A673 (cell line): ENCODE measurements at regions of chr2 and their contacts with region 1.

Region 1: DNA sequence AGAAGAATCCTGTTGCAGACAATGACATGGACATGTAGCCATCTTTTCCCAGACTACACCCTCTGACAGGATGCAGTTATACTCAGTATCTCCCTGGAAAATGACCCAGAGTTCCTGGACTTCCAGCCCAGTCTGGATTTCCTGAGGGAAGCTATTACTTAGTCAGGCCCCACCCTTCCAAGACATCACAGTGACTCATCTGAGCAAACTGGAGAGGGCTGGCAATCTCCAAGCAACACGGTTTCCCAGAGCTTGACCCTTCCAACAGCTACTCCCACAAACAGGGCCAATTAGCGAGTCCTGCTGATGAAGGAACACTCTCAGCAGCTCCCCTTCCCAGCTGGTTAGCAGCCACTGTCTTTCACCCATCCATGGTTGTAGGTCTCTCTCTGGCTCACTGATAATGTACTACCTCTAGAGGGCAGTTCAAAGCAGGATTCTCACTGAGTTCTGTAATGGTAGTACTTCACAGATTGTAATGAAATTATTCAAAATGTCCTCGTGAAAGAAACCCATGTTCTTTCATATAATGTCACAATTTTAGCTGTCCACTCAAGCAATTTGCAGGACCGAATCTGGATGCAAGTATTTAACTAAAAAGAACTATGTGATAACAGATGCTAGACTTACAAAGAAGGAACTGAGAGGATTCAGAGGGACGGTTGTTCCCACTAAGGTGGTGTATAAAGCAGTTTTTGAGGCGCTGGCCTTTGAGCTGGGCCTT is 110.2 kb downstream of the MDH1 start:
- DNase-seq: peak; percentile 73
- H3K4me3 ChIP-seq: no peak overlapping the region
- H3K27ac ChIP-seq: no peak overlapping the region
- H3K4me1 ChIP-seq: no peaks in the 10 kb centered on the region
- H3K27me3 ChIP-seq: no peaks in the 10 kb centered on the region
- CTCF ChIP-seq: peak; percentile 70

Region 2: DNA sequence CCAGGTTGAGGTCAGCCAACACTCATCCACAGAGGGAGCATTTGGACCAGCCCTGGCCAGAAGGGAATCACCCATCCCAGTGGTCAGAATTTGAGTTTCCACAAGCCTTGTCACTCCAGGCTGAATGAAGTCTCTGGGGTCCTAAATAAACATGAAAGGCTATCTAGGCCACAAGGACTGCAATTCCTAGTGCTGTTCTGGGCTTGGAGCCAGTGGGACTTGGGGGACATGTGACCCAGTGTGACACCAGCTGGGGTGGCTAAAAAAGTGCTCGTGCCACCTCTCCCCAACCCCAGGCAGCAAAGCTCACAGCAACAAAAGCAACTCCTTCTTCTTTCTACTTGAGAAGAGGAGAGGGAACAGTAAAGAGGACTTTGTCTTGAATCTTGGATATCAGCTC is 18.5 kb before region 1 on chr2:
- CTCF ChIA-PET with region 1: no interaction called
- POLR2A ChIA-PET with region 1: no interaction called
- intact Hi-C with region 1: no loop called
- DNase-seq: no peak
- H3K4me3 ChIP-seq: no peak overlapping the region
- H3K27ac ChIP-seq: no peak overlapping the region
- H3K4me1 ChIP-seq: no peaks in the 10 kb centered on the region
- H3K27me3 ChIP-seq: no peaks in the 10 kb centered on the region
- CTCF ChIP-seq: no peak

Region 3: GRCh38 chr2:63841254-63842022 is 142.5 kb after region 1 on chr2 and contains the start of gene UGP2:
- CTCF ChIA-PET with region 1: no interaction called
- POLR2A ChIA-PET with region 1: no interaction called
- intact Hi-C with region 1: loop called (anchors 5 kb)
- DNase-seq: peak; percentile 88
- H3K4me3 ChIP-seq: peak within 1 kb of the TSS; percentile 93
- H3K27ac ChIP-seq: peak within 1 kb of the TSS; percentile 90
- H3K4me1 ChIP-seq: peaks cover 12% of the 10 kb centered on the region
- H3K27me3 ChIP-seq: no peaks in the 10 kb centered on the region
- CTCF ChIP-seq: peak; percentile 52
- total RNA-seq, gene UGP2: 60.3 and 70.4 TPM in 2 replicates

Region 4: GRCh38 chr2:63861220-63861822 is 162.3 kb after region 1 on chr2:
- CTCF ChIA-PET with region 1: interaction called, 15 read pairs
- POLR2A ChIA-PET with region 1: no interaction called
- intact Hi-C with region 1: loop called (anchors 2 kb)
- DNase-seq: peak; percentile 75
- H3K4me3 ChIP-seq: no peak overlapping the region
- H3K27ac ChIP-seq: no peak overlapping the region
- H3K4me1 ChIP-seq: no peaks in the 10 kb centered on the region
- H3K27me3 ChIP-seq: no peaks in the 10 kb centered on the region
- CTCF ChIP-seq: peak; percentile 65

Region 5: GRCh38 chr2:63888490-63889402 is 189.8 kb after region 1 on chr2:
- CTCF ChIA-PET with region 1: no interaction called
- POLR2A ChIA-PET with region 1: no interaction called
- intact Hi-C with region 1: loop called (anchors 2 kb)
- DNase-seq: peak; percentile 65
- H3K4me3 ChIP-seq: no peak overlapping the region
- H3K27ac ChIP-seq: no peak overlapping the region
- H3K4me1 ChIP-seq: no peaks in the 10 kb centered on the region
- H3K27me3 ChIP-seq: no peaks in the 10 kb centered on the region
- CTCF ChIP-seq: peak; percentile 79